ENCODE measurements at regions of chr4 and their contacts with region 1.

Region 1: DNA sequence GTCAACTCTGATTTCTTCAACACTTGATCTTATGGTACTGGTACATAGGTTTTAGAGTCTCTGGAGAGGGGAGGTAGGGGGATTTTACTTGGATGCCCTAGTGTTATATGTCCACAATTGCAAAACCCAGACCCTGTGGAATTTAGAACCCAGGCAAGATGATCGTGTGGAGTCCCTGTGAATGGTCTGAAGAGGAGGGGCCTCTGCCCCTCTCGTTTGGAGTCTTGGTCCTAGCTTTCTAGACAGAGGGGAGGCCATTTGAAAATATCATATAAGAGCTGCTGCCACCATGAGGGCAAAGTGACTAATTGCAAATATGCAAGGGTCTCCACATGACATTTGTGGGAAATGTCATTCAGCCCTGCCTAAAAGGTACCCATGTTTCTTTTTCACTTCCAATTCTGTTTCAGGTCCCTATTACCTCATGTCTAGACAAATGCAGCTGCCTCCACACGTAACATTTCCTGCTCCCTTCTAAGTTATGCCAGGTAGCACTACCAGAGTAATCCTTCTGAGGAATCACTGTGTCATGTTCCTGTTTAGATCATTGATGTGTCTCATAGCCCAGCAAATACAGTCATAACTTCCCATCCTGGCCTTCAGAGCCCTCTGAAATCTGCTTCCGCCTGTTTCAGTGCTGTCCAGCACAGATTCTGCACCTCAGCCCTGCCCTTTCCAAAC is 126.8 kb downstream of the KLHL8 start:
- DNase-seq: peak; percentile 75
- ATAC-seq: peak; percentile 84
- H3K4me3 ChIP-seq: no peak overlapping the region
- H3K4me3 Mint-ChIP-seq: no peak overlapping the region
- H3K27ac ChIP-seq: peak overlapping the region in 1 of 2 donors; percentile 32
- H3K27ac Mint-ChIP-seq: peak overlapping the region; percentile 77
- H3K4me1 ChIP-seq: peaks cover 10 to 14% of the 10 kb centered on the region in 2 donors
- H3K4me1 Mint-ChIP-seq: peaks cover 21% of the 10 kb centered on the region
- H3K27me3 ChIP-seq: no peaks in the 10 kb centered on the region
- H3K27me3 Mint-ChIP-seq: no peaks in the 10 kb centered on the region
- CTCF ChIP-seq: peak; percentile 80

Region 2: GRCh38 chr4:86927843-86928395 is 165.7 kb before region 1 on chr4:
- CTCF ChIA-PET with region 1: interaction called, 390 read pairs
- POLR2A ChIA-PET with region 1: interaction called, 14 read pairs
- intact Hi-C with region 1: no loop called
- DNase-seq: no peak
- ATAC-seq: no peak
- H3K4me3 ChIP-seq: no peak overlapping the region
- H3K4me3 Mint-ChIP-seq: no peak overlapping the region
- H3K27ac ChIP-seq: no peak overlapping the region
- H3K27ac Mint-ChIP-seq: no peak overlapping the region
- H3K4me1 ChIP-seq: peaks cover 10 to 13% of the 10 kb centered on the region in 2 donors
- H3K4me1 Mint-ChIP-seq: peaks cover 14% of the 10 kb centered on the region
- H3K27me3 ChIP-seq: no peaks in the 10 kb centered on the region
- H3K27me3 Mint-ChIP-seq: no peaks in the 10 kb centered on the region
- CTCF ChIP-seq: no peak

Region 3: GRCh38 chr4:87025614-87026041 is 68.0 kb before region 1 on chr4:
- CTCF ChIA-PET with region 1: no interaction called
- POLR2A ChIA-PET with region 1: no interaction called
- intact Hi-C with region 1: no loop called
- DNase-seq: no peak
- ATAC-seq: no peak
- H3K4me3 ChIP-seq: no peak overlapping the region
- H3K4me3 Mint-ChIP-seq: no peak overlapping the region
- H3K27ac ChIP-seq: no peak overlapping the region
- H3K27ac Mint-ChIP-seq: peak overlapping the region; percentile 79
- H3K4me1 ChIP-seq: peaks cover 41 to 61% of the 10 kb centered on the region in 2 donors
- H3K4me1 Mint-ChIP-seq: peaks cover 62% of the 10 kb centered on the region
- H3K27me3 ChIP-seq: no peaks in the 10 kb centered on the region
- H3K27me3 Mint-ChIP-seq: no peaks in the 10 kb centered on the region
- CTCF ChIP-seq: no peak

Region 4: DNA sequence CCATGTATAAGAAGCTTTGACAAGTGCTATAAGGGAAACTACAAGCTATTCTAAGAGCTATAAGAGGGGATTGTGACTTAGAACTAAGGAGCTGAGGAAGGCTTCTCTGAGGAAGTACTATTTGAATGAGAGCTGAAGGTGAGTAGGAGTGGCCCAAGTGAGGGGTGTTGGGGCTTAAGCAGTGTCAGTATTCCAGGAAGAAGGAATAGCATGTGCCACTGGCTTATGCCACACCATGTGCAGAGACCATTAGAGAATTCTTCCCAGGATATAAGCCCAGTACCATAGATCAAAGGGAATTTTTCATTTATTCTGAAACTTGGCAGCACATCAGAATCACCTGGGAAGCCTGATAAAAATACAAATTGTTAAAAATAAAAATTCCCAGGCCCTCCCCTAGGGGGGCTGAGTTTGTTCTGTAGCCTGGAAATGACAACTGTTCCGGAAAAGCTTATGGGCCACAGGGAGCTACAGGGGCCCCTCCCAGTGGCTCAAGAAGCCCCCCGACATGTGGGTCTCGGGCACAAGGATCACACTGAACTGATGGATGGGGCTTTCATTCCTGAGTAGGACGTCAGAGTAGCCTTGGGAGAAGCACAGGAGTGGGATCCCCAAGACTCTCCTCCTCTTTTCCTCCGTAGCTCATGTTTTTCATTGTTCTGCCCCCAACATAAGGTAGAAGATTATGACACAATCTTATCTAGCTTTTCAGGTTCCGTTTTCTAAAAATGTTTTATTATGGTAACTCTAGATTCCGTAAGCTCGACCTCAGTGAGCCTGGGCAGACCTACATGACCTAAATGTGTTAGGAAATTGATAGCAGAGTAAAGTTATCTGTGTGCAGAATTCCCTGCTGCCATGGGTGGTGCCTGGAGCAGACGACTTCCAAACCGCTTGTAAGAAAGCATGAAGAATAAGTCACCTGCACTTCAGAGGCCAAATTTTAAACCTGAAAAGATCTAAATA is 39.5 kb before region 1 on chr4:
- CTCF ChIA-PET with region 1: interaction called, 11 read pairs
- POLR2A ChIA-PET with region 1: no interaction called
- intact Hi-C with region 1: loop called (anchors 5 kb)
- DNase-seq: no peak
- ATAC-seq: no peak
- H3K4me3 ChIP-seq: no peak overlapping the region
- H3K4me3 Mint-ChIP-seq: peak overlapping the region; percentile 17
- H3K27ac ChIP-seq: peak overlapping the region in 1 of 2 donors; percentile 57
- H3K27ac Mint-ChIP-seq: peak overlapping the region; percentile 29
- H3K4me1 ChIP-seq: peaks cover 25 to 31% of the 10 kb centered on the region in 2 donors
- H3K4me1 Mint-ChIP-seq: peaks cover 69% of the 10 kb centered on the region
- H3K27me3 ChIP-seq: no peaks in the 10 kb centered on the region
- H3K27me3 Mint-ChIP-seq: no peaks in the 10 kb centered on the region
- CTCF ChIP-seq: no peak

Region 5: DNA sequence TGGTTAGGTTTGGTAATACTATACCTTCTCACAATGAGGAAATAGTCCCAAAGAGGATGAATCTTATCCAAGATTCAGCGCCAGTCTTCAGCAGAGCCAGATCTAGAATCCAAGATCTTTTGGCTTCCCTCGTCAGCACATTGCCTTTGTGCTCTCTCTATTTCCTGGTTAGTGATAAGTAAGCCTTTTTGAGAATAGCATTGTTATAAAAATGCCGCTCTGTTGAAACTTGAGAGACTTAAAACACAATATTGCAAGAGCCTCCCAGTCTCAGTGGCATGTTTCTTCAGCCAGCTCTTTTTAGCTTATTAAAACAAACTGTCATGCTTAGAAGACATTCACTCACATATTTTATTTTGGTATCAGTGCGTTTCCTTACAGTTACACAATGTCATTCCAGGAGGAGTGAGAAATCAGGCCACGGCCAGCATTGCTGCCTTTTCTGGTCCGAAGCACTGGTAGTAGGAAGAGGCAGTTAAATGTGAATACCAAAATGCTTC is 14.5 kb before region 1 on chr4:
- CTCF ChIA-PET with region 1: interaction called, 20 read pairs
- POLR2A ChIA-PET with region 1: interaction called, 4 read pairs
- intact Hi-C with region 1: no loop called
- DNase-seq: no peak
- ATAC-seq: no peak
- H3K4me3 ChIP-seq: no peak overlapping the region
- H3K4me3 Mint-ChIP-seq: no peak overlapping the region
- H3K27ac ChIP-seq: no peak overlapping the region
- H3K27ac Mint-ChIP-seq: no peak overlapping the region
- H3K4me1 ChIP-seq: peaks cover 3 to 17% of the 10 kb centered on the region in 2 donors
- H3K4me1 Mint-ChIP-seq: peaks cover 35% of the 10 kb centered on the region
- H3K27me3 ChIP-seq: no peaks in the 10 kb centered on the region
- H3K27me3 Mint-ChIP-seq: no peaks in the 10 kb centered on the region
- CTCF ChIP-seq: no peak